ENCODE measurements at regions of chr5 and their contacts with region 1.

Region 1: DNA sequence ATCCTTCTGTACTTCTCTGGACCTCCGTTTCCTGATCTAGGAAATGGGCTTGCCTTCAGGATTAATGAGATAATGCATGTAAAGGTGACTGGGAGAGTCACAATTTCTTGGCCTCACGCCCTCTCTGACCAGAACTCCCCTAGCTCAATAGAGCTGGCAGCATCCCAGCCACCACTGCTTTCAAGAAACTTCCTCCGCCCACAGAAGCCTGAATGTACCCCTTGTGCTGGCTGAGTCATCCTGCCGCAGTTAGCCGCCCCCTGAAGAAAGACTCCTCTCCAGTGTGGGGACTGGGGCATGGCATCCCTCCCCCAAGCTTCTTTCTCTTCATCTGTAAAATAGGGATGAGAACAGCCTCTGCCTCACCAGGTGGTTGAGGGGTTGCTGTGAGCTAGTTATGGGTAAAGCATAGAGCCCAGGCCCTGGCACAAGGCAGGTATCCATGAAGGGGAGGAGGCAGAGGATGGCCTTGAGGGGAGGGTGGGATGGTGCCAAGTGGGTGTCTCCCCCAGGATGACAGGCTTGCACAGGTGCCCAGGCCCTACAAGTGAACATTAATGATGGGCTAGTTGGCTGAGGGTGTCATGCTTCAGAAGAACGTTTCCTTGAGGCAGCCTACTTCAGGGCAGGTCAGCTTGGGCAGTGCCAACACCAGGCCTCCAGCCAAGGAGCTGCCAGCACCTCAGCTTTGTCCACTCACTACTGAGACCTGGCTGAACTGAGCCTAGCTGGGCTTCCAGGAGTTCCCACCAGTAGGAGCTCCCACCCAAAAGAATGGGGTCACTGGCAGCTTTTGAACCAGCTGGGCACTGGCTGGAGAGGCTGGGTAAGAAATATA is 3.4 kb downstream of the PDLIM4 start:
- DNase-seq: peak; percentile 39 to 74
- ATAC-seq: peak in 4 of 8 donors; percentile 38 to 60 (median 52)
- H3K4me3 ChIP-seq: no peak overlapping the region
- H3K27ac ChIP-seq: peak overlapping the region in 5 of 10 donors; percentile 23 to 65 (median 35)
- H3K4me1 ChIP-seq: peaks cover 24 to 78% (median 53%) of the 10 kb centered on the region in 9 donors
- H3K27me3 ChIP-seq: peaks cover 0 to 24% (median 0%) of the 10 kb centered on the region in 7 donors
- CTCF ChIP-seq: no peak

Region 2: DNA sequence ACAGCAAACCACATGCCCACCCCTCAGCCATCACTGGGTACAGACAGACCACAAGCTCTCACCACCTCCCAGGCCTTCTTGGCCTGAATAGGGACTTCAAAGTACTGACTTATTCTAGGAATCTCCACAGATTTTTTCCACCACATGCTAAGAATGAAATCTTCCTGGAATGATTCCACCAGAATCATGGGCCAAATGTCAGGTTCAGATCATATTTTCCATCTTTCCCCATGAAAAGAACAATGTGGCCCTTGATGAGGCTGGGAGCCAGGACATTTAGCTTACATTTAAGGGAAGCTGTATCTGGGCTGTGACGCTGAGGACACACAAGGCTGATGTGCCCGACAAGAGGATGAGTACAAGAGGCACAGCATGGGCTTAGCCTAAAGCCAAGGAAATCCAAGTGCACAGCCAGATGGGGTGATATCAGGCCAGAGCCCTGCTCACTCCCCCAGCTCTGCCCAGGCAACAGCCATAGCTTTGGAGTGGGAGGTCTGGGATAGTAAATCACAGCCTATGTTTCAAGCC is 277.6 kb before region 1 on chr5:
- intact Hi-C with region 1: no loop called
- DNase-seq: no peak
- ATAC-seq: peak in 3 of 8 donors; percentile 11 to 50 (median 36)
- H3K4me3 ChIP-seq: no peak overlapping the region
- H3K27ac ChIP-seq: no peak overlapping the region
- H3K4me1 ChIP-seq: peaks cover 0 to 10% (median 0%) of the 10 kb centered on the region in 9 donors
- H3K27me3 ChIP-seq: no peaks in the 10 kb centered on the region
- CTCF ChIP-seq: no peak

Region 3: DNA sequence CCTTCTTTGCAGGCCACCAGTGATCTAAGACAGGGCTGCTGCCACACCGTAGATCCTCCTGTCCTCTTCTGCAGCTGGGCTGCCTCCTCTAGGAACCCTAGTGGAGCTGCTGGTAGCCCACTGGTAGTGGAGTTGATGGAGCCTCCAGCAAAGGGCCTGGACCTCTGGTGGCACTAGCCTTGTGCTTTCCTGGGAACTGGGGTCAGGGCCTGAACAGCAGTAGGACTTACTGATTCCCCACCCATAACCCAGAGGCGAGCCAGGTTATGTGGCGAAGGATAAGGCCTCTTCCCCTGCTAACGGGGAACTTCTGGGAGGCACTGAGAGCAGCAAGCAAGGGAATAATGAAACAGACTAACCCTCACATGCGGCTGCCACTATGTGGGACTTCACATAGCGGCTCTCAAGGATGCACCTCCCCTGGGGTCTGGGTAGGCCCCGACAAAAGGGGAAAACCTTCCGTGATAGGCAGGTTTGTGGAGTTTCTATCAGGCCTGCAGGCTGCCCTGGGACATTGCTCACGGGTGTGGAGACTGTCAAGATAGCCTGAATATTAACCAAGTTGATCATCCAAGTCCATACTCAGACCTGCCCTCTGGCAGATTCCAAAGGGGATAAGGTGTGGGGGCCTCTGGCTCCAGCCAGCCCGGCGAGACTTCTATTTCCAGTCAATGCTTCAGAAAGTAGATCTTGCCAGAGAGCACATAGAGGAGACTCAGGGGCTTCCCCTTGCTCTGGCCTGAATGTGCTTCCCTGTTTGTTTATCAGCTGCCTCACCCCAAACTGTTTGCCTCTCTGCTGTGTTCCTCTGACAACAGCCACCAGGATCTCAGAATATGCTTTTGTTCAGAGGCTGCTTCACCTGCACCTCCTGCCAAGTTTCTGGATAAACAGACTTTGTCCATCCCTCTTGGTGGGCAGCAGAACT is 40.7 kb after region 1 on chr5:
- intact Hi-C with region 1: no loop called
- DNase-seq: peak in 1 of 2 donors; percentile 29
- ATAC-seq: peak; percentile 52 to 89 (median 74)
- H3K4me3 ChIP-seq: no peak overlapping the region
- H3K27ac ChIP-seq: peak overlapping the region; percentile 36 to 78 (median 69)
- H3K4me1 ChIP-seq: peaks cover 8 to 30% (median 22%) of the 10 kb centered on the region in 9 donors
- H3K27me3 ChIP-seq: no peaks in the 10 kb centered on the region
- CTCF ChIP-seq: no peak

Region 4: GRCh38 chr5:132500931-132501630 is 240.1 kb after region 1 on chr5:
- intact Hi-C with region 1: loop called in 1 of 10 experiments (anchors 10 kb)
- DNase-seq: peak; percentile 55 to 73
- ATAC-seq: peak in 5 of 8 donors; percentile 10 to 46 (median 38)
- H3K4me3 ChIP-seq: no peak overlapping the region
- H3K27ac ChIP-seq: peak overlapping the region in 9 of 10 donors; percentile 0 to 100 (median 46)
- H3K4me1 ChIP-seq: peaks cover 15 to 69% (median 44%) of the 10 kb centered on the region in 9 donors
- H3K27me3 ChIP-seq: no peaks in the 10 kb centered on the region
- CTCF ChIP-seq: peak; percentile 77 to 89 (median 84)